Lower leg skin (tissue), 4 donors: ENCODE measurements at regions of chr5 and their contacts with region 1.

Region 1: DNA sequence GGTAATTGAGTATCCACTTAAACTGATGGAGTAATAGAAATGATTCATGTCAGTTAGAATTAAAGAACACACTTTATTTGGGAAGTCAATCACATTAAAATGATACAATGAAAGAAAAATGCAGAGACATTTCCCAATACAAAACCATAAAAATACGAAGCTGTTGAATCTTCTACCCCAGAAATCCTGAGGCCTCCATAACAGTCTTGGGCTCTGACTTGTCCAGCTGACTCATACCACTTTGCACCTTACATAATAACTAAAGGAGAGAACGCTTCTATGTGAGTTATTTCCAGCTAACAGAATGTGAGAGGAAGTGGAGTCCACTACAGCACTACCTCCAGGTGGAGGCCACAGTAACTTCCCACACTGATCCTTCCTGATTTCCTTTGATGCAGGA is 305.0 kb downstream of the MRPS30 start:
- DNase-seq: no peak
- H3K4me3 ChIP-seq: no peak overlapping the region
- CTCF ChIP-seq: no peak
- POLR2A ChIP-seq: no peak

Region 2: DNA sequence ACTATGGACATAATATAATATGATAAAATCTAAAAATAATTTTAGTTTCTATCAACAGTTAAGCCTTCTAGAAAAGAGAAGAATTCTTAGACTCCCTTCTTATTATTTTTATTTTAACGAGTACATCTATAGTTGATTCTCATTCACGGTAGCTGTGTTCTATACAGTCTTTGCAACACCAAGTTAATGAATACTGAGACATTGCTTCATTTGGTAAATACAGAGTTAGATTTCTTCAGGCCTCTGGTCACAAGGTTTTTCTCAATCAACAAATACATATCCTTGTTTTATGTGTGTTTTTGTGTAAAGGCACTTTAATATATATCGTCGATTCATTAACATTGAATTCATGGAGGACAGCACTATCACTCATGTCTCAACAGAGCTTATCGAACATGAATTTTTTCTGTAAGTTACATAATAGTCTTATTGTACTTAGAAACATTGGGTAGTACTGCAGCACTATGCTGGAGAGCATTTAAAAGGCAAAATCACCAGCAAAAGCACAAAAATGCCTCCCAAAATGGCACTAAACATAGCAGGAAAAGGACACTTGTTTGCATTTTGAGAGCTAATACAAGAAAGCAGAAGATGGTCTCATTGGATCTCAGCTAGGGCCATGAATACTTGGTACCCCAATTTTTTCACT is 963.5 kb before region 1 on chr5:
- intact Hi-C with region 1: loop called (anchors 5 kb)
- DNase-seq: no peak
- H3K4me3 ChIP-seq: no peak overlapping the region
- CTCF ChIP-seq: no peak
- POLR2A ChIP-seq: no peak

Region 3: DNA sequence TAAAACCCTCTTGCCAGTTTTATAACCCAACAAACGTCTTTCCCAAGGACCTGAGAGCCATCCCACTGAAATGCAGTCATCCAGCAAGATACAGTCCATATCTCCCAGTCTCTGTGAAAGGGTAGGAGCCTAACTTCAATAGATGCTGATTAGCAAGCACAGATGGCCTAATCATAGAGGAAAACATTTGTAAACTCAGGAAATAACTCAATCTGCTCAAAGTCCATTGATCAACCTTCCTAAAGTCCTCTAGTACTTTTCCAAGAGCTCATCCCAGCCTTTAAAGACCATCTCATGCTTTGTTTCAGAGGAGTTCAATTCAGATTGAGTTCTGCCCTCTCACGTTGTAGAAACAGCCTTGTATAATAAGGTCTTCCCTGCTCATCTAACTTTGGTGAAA is 19.2 kb after region 1 on chr5:
- intact Hi-C with region 1: no loop called
- DNase-seq: no peak
- H3K4me3 ChIP-seq: no peak overlapping the region
- CTCF ChIP-seq: no peak
- POLR2A ChIP-seq: no peak